ENCODE measurements at regions of chr5 and their contacts with region 1.

Region 1: DNA sequence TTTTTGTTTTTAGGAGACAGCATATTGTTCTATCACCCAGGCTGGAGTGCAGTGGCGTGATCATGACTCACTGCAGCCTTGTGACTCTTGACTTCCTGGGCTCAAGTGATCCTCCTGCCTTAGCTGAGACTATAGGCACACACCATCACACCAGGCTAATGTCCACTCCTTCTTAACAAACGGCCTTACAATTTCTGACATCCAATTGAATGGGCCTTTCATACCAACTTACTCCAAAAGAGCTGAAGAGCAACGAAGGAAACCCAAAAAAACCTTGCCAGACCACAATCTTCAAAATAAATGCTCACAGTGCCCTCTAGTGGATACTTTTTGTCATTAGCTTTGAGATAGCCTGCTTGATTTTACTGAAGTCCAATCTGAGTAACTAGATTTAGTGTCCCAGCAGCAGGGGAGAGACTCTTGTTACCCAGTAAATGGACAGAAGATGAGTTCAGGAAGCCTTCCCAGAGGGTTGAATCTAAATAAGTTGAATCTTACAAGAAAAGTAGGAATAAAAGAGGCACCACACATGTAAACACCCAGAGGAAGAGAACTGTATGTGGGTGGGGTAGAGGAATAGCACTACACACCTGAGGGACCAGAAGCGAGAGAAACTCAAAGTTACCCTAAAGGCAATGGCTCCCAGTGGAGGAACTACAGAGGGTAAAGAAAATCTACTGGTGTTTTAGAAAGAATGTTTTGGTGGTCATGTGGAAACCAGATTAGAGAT is 9.3 kb downstream of the ZNF622 start:
- DNase-seq: peak; percentile 96
- ATAC-seq: peak; percentile 90
- H3K4me3 ChIP-seq: no peak overlapping the region
- H3K27ac ChIP-seq: peak overlapping the region; percentile 42
- H3K4me1 ChIP-seq: peaks cover 12% of the 10 kb centered on the region
- H3K27me3 ChIP-seq: no peaks in the 10 kb centered on the region
- CTCF ChIP-seq: peak; percentile 99

Region 2: GRCh38 chr5:16160706-16161105 is 295.6 kb before region 1 on chr5:
- CTCF ChIA-PET with region 1: no interaction called
- POLR2A ChIA-PET with region 1: no interaction called
- intact Hi-C with region 1: loop called (anchors 2 kb)
- DNase-seq: peak; percentile 77
- ATAC-seq: peak; percentile 64; the same call in 1 of the 2 replicates
- H3K4me3 ChIP-seq: no peak overlapping the region
- H3K27ac ChIP-seq: no peak overlapping the region
- H3K4me1 ChIP-seq: no peaks in the 10 kb centered on the region
- H3K27me3 ChIP-seq: no peaks in the 10 kb centered on the region
- CTCF ChIP-seq: peak; percentile 86

Region 3: GRCh38 chr5:16418471-16418922 is 37.8 kb before region 1 on chr5:
- CTCF ChIA-PET with region 1: no interaction called
- POLR2A ChIA-PET with region 1: no interaction called
- intact Hi-C with region 1: no loop called
- DNase-seq: no peak
- ATAC-seq: no peak
- H3K4me3 ChIP-seq: no peak overlapping the region
- H3K27ac ChIP-seq: no peak overlapping the region
- H3K4me1 ChIP-seq: no peaks in the 10 kb centered on the region
- H3K27me3 ChIP-seq: peaks cover 26% of the 10 kb centered on the region
- CTCF ChIP-seq: no peak